ENCODE measurements at regions of chr10 and their contacts with region 1.

Region 1: GRCh38 chr10:36499693-36500092 is 625.7 kb upstream of the ANKRD30A start:
- DNase-seq: peak; percentile 97
- ATAC-seq: peak; percentile 82
- H3K4me3 ChIP-seq: no peak overlapping the region
- H3K27ac ChIP-seq: peak overlapping the region; percentile 64
- H3K4me1 ChIP-seq: peaks cover 53% of the 10 kb centered on the region
- H3K27me3 ChIP-seq: no peaks in the 10 kb centered on the region
- CTCF ChIP-seq: no peak

Region 2: GRCh38 chr10:36003031-36003600 is 496.6 kb before region 1 on chr10:
- CTCF ChIA-PET with region 1: no interaction called
- POLR2A ChIA-PET with region 1: no interaction called
- intact Hi-C with region 1: no loop called
- DNase-seq: no peak
- ATAC-seq: no peak
- H3K4me3 ChIP-seq: no peak overlapping the region
- H3K27ac ChIP-seq: no peak overlapping the region
- H3K4me1 ChIP-seq: no peaks in the 10 kb centered on the region
- H3K27me3 ChIP-seq: no peaks in the 10 kb centered on the region
- CTCF ChIP-seq: no peak

Region 3: GRCh38 chr10:36515319-36515718 is 15.6 kb after region 1 on chr10:
- CTCF ChIA-PET with region 1: interaction called, 4 read pairs
- POLR2A ChIA-PET with region 1: interaction called, 8 read pairs
- intact Hi-C with region 1: loop called (anchors 1 kb)
- DNase-seq: no peak
- ATAC-seq: peak; percentile 32
- H3K4me3 ChIP-seq: no peak overlapping the region
- H3K27ac ChIP-seq: peak overlapping the region; percentile 40; the same call in 1 of the 2 replicates
- H3K4me1 ChIP-seq: peaks cover 30% of the 10 kb centered on the region
- H3K27me3 ChIP-seq: no peaks in the 10 kb centered on the region
- CTCF ChIP-seq: no peak

Region 4: GRCh38 chr10:36676756-36677430 is 177.2 kb after region 1 on chr10:
- CTCF ChIA-PET with region 1: no interaction called
- POLR2A ChIA-PET with region 1: interaction called, 3 read pairs
- intact Hi-C with region 1: loop called (anchors 2 kb)
- DNase-seq: peak; percentile 90
- ATAC-seq: peak; percentile 72
- H3K4me3 ChIP-seq: no peak overlapping the region
- H3K27ac ChIP-seq: peak overlapping the region; percentile 47
- H3K4me1 ChIP-seq: peaks cover 47% of the 10 kb centered on the region
- H3K27me3 ChIP-seq: no peaks in the 10 kb centered on the region
- CTCF ChIP-seq: no peak